ENCODE measurements at regions of chr4 and their contacts with region 1.

Region 1: DNA sequence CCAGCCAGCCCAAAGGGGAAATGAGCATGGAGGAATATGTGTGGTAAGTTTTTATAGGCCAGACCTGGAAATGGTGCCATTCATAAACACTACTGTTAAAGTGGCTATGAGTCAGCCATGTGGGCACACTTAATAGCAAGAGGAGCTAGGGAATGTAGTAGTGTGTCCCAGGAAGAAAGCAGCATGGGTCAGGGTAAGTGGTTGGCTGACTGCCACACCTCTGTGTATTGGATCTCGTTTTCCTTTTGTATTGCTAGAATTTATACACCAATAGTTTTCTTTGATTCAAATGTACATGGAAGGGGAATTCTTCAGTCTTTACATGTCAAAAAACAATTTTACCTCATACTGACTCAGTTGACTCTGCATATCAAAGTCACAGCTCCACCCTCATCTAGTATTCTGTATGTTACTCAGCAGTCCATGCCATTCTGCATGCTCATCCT is 22.9 kb upstream of the SGMS2 start:
- DNase-seq: no peak
- H3K4me3 ChIP-seq: no peak overlapping the region
- CTCF ChIP-seq: no peak
- POLR2A ChIP-seq: no peak

Region 2: GRCh38 chr4:107824353-107825071 is 22.7 kb after region 1 on chr4 and contains the start of gene SGMS2:
- intact Hi-C with region 1: loop called (anchors 1 kb)
- DNase-seq: peak; percentile 87 to 98
- H3K4me3 ChIP-seq: peak within 1 kb of the TSS; percentile 74
- CTCF ChIP-seq: no peak
- POLR2A ChIP-seq: no peak
- total RNA-seq, gene SGMS2: 38.7 to 81.5 (median 55.9) TPM

Measured in lower leg skin (tissue), 4 donors.